Activated CD8-positive, alpha-beta T cell treated with anti-CD3 and anti-CD28 coated beads for 36 hours (primary cell): ENCODE measurements at regions of chr17 and their contacts with region 1.

Region 1: DNA sequence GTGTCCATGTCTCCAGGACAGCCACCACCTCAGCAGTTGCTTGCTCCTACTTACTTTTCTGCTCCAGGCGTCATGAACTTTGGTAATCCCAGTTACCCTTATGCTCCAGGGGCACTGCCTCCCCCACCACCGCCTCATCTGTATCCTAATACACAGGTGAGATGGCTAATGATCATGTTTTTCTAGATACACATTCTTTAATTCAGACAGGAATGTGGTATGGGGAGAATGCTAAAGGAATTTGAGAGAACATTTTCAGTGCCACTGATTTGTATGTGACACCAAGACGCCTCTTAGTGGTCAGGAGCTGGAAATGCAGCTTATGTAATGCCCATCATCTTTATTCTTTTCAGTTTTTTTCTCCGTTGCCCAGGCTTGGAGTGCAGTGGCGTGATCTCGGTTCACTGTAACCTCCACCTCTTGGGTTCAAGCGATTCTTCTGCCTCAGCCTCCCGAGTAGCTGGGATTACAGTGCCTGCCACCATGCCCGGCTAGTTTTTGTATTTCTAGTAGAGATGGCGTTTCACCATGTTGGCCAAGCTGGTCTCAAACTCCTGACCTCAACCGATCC is 8.9 kb upstream of the RAPGEFL1 start:
- DNase-seq: peak; percentile 50
- ATAC-seq: peak; percentile 89
- H3K4me3 Mint-ChIP-seq: no peak overlapping the region
- H3K27ac Mint-ChIP-seq: peak overlapping the region; percentile 36
- H3K4me1 Mint-ChIP-seq: peaks cover 7% of the 10 kb centered on the region
- H3K27me3 Mint-ChIP-seq: no peaks in the 10 kb centered on the region
- CTCF ChIP-seq: peak; percentile 96

Region 2: GRCh38 chr17:39730095-39730921 is 438.0 kb before region 1 on chr17 and contains the start of gene MIEN1:
- CTCF ChIA-PET with region 1: no interaction called
- POLR2A ChIA-PET with region 1: no interaction called
- intact Hi-C with region 1: no loop called
- DNase-seq: peak; percentile 94
- ATAC-seq: peak; percentile 96
- H3K4me3 Mint-ChIP-seq: peak within 1 kb of the TSS; percentile 93
- H3K27ac Mint-ChIP-seq: peak within 1 kb of the TSS; percentile 91
- H3K4me1 Mint-ChIP-seq: peaks cover 17% of the 10 kb centered on the region
- H3K27me3 Mint-ChIP-seq: no peaks in the 10 kb centered on the region
- CTCF ChIP-seq: peak; percentile 99
- total RNA-seq, gene MIEN1: 32.5 to 34.0 TPM

Region 3: DNA sequence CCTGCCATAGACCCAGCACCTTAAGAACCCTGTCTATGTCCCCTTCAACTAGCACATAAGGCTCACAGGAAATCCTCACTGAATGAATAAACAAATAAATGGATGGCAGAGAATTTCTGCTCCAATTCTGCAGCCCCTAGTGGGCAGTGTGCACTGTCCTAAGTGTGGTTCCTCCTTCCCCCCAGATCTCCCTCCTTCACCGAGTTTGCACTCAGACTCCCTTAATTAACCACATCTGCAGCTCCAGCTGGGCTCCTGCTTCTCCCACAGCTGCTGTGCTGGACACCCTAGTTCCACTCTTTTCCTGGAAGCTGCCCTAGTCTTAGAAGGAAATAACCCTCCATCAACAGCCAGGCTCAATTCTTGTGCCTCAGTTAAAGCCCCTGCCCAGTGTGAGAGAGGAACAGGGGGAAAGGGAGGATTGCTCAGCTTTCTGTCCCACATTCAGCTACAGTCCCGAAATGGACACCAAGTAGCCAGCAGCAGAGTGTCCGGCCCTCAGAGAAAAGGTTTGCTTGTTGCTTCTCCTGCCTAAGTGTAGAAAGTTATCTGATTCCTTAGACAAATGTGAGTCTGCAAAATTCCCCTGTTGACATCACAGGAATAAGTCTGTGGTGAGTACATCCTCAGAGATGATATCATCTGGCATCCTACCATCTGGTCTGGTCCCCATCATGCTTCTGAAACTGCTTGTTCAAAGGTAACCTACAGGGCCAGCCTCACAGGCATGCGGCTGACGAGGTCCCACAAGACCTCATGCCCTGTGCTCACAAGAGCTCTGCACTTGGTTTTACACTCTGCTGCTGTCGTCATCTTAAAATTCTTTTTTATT is 228.5 kb before region 1 on chr17:
- CTCF ChIA-PET with region 1: no interaction called
- POLR2A ChIA-PET with region 1: no interaction called
- intact Hi-C with region 1: no loop called
- DNase-seq: peak; percentile 82
- ATAC-seq: peak; percentile 97
- H3K4me3 Mint-ChIP-seq: no peak overlapping the region
- H3K27ac Mint-ChIP-seq: peak overlapping the region; percentile 68
- H3K4me1 Mint-ChIP-seq: peaks cover 16% of the 10 kb centered on the region
- H3K27me3 Mint-ChIP-seq: no peaks in the 10 kb centered on the region
- CTCF ChIP-seq: peak; percentile 10

Region 4: GRCh38 chr17:40092581-40092980 is 75.8 kb before region 1 on chr17:
- CTCF ChIA-PET with region 1: no interaction called
- POLR2A ChIA-PET with region 1: no interaction called
- intact Hi-C with region 1: no loop called
- DNase-seq: no peak
- ATAC-seq: no peak
- H3K4me3 Mint-ChIP-seq: no peak overlapping the region
- H3K27ac Mint-ChIP-seq: no peak overlapping the region
- H3K4me1 Mint-ChIP-seq: peaks cover 37% of the 10 kb centered on the region
- H3K27me3 Mint-ChIP-seq: no peaks in the 10 kb centered on the region
- CTCF ChIP-seq: no peak

Region 5: GRCh38 chr17:40121181-40122135 is 46.9 kb before region 1 on chr17 and contains the start of gene MSL1:
- CTCF ChIA-PET with region 1: interaction called, 95 read pairs
- POLR2A ChIA-PET with region 1: interaction called, 3 read pairs
- intact Hi-C with region 1: no loop called
- DNase-seq: peak; percentile 85
- ATAC-seq: peak; percentile 76
- H3K4me3 Mint-ChIP-seq: peak within 1 kb of the TSS; percentile 93
- H3K27ac Mint-ChIP-seq: peak within 1 kb of the TSS; percentile 76
- H3K4me1 Mint-ChIP-seq: peaks cover 31% of the 10 kb centered on the region
- H3K27me3 Mint-ChIP-seq: no peaks in the 10 kb centered on the region
- CTCF ChIP-seq: no peak
- total RNA-seq, gene MSL1: 69.0 to 70.1 TPM

Region 6: DNA sequence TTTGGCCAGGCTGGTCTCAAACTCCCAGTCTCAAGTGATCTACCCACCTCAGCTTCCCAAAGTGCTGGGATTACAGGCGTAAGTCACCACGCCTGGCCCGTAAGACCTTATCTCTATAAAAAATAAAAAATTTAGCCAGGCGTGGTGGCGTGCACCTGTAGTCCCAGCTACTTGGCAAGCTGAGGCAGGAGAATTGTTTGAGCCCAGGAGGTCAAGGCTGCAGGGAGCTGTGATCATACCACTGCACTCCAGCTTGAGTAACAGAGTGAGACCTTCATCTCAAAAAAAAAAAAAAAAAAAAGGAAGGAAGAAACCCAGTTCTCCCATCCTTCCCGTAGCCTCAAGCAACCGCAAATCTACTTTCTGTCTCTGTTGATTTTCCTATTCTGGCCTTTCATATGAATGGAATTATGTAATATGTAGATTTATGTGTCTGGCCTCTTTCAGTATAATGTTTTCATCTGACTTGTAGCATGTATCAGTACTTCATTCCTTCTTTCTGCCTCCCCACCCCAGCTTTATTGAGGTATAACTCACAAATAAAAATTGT is 16.9 kb before region 1 on chr17:
- CTCF ChIA-PET with region 1: interaction called, 39 read pairs
- POLR2A ChIA-PET with region 1: interaction called, 3 read pairs
- intact Hi-C with region 1: no loop called
- DNase-seq: no peak
- ATAC-seq: no peak
- H3K4me3 Mint-ChIP-seq: no peak overlapping the region
- H3K27ac Mint-ChIP-seq: peak overlapping the region; percentile 62
- H3K4me1 Mint-ChIP-seq: peaks cover 59% of the 10 kb centered on the region
- H3K27me3 Mint-ChIP-seq: no peaks in the 10 kb centered on the region
- CTCF ChIP-seq: no peak

Region 7: DNA sequence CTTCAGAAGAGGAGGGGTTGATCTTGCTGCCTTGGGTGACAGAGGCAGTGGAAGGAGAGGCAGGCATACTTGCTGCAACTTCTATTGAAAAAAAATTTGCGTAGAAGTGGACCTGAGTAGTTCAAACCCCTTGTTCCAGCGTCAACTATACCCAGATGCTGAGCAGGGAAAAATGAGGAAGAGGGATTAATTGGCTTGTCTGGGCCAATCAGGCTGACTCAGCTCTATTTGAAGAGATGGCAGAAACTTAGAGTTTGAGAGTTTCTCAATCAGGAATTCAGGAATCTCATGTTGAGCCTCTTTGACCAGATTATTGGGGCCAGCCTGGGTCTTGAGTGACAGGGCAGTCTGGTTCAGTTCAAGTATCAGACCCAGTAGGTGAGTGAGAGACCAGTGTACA is 10.4 kb before region 1 on chr17:
- CTCF ChIA-PET with region 1: interaction called, 39 read pairs
- POLR2A ChIA-PET with region 1: interaction called, 3 read pairs
- intact Hi-C with region 1: no loop called
- DNase-seq: no peak
- ATAC-seq: no peak
- H3K4me3 Mint-ChIP-seq: no peak overlapping the region
- H3K27ac Mint-ChIP-seq: peak overlapping the region; percentile 79
- H3K4me1 Mint-ChIP-seq: peaks cover 31% of the 10 kb centered on the region
- H3K27me3 Mint-ChIP-seq: no peaks in the 10 kb centered on the region
- CTCF ChIP-seq: no peak

Region 8: DNA sequence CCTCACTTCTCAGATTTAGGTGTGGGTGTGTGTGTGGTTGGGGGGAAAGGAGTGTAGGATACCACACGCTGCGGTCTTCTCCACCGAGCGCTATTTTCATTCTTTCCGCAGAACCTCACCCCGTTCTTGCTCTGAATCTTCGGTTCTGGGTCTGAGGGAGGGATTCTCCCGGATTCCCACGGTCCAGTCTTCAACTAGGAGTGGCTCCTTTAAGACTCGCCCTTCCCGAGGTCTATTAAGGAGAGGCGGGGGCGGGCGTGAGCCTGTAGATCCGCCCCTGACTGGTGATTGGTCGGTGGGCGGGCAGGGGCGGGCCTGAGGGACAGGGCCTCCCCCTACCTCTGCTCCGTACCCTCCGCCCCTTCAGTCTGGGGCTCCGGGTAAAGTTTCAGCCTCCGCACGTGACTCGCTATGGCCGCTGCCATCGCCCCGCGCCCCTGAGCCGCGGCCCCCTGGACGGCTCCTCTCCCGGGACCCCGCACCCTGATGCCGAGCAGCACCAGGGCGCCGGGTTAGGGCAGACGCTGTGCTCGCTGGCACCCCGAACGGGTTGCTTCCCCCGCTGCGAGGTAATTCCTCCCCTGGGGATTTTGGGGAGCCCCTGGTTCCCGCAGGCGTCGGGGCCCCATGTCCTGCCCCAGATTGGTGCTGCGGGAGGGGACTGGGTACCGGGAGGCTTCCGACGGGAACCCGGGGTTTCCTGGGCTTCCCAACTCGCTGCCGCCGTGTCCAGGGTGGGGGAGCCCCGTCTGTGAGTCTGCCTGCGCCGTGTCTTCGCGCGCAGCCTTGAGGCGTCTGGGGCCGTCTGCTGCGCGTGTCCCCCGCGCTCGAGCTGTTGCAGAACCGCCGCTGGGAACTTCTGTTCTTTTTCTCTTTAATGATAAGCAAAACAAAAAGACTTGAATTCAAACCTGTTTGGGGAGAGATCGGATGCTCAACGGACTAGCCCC is 149.8 kb after region 1 on chr17:
- CTCF ChIA-PET with region 1: no interaction called
- POLR2A ChIA-PET with region 1: no interaction called
- intact Hi-C with region 1: no loop called
- DNase-seq: peak; percentile 95
- ATAC-seq: peak; percentile 68
- H3K4me3 Mint-ChIP-seq: peak overlapping the region; percentile 98
- H3K27ac Mint-ChIP-seq: peak overlapping the region; percentile 99
- H3K4me1 Mint-ChIP-seq: peaks cover 77% of the 10 kb centered on the region
- H3K27me3 Mint-ChIP-seq: no peaks in the 10 kb centered on the region
- CTCF ChIP-seq: no peak